AG04450 (cell line): ENCODE measurements at regions of chr3 and their contacts with region 1.

Region 1: GRCh38 chr3:99213019-99213418 is 311.5 kb upstream of the DCBLD2 start:
- DNase-seq: no peak
- H3K4me3 ChIP-seq: no peak overlapping the region
- H3K27ac ChIP-seq: no peak overlapping the region
- H3K27me3 ChIP-seq: no peaks in the 10 kb centered on the region
- CTCF ChIP-seq: no peak

Region 2: DNA sequence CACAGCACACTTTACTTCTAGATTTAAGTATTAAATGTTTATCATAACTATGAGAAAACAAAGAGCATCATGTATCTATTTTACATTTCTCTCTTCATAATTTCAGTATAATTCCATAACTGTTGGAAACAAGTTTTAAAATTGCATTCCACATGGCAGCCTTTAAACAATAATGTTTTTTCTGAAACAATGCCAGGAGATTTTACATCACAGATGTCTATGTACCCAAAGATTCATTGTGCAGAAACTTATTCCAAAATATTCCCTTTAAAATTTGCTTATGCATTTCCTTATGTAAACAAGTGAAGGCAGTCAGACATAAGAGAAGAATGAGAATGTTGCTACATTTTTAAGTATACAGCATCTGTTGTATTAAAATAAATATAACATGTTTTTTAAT is 100.5 kb after region 1 on chr3:
- CTCF ChIA-PET with region 1: interaction called, 14 read pairs
- POLR2A ChIA-PET with region 1: no interaction called
- DNase-seq: no peak
- H3K4me3 ChIP-seq: no peak overlapping the region
- H3K27ac ChIP-seq: no peak overlapping the region
- H3K27me3 ChIP-seq: no peaks in the 10 kb centered on the region
- CTCF ChIP-seq: no peak

Region 3: GRCh38 chr3:99484871-99485270 is 271.9 kb after region 1 on chr3:
- CTCF ChIA-PET with region 1: no interaction called
- POLR2A ChIA-PET with region 1: no interaction called
- DNase-seq: no peak
- H3K4me3 ChIP-seq: no peak overlapping the region
- H3K27ac ChIP-seq: no peak overlapping the region
- H3K27me3 ChIP-seq: no peaks in the 10 kb centered on the region
- CTCF ChIP-seq: no peak